ENCODE measurements at regions of chr17 and their contacts with region 1.

Region 1: GRCh38 chr17:41548844-41549595 is 20.9 kb upstream of the KRT19 start:
- DNase-seq: peak; percentile 94
- H3K4me3 Mint-ChIP-seq: no peak overlapping the region
- H3K27ac Mint-ChIP-seq: no peak overlapping the region
- H3K4me1 Mint-ChIP-seq: peaks cover 18% of the 10 kb centered on the region
- H3K27me3 Mint-ChIP-seq: no peaks in the 10 kb centered on the region

Region 2: GRCh38 chr17:40803617-40804082 is 745.4 kb before region 1 on chr17:
- CTCF ChIA-PET with region 1: no interaction called
- intact Hi-C with region 1: loop called (anchors 1 kb)
- DNase-seq: peak; percentile 90
- H3K4me3 Mint-ChIP-seq: no peak overlapping the region
- H3K27ac Mint-ChIP-seq: no peak overlapping the region
- H3K4me1 Mint-ChIP-seq: no peaks in the 10 kb centered on the region
- H3K27me3 Mint-ChIP-seq: peaks cover 23% of the 10 kb centered on the region

Region 3: GRCh38 chr17:40909351-40909750 is 639.7 kb before region 1 on chr17:
- CTCF ChIA-PET with region 1: interaction called, 18 read pairs
- intact Hi-C with region 1: loop called (anchors 1 kb)
- DNase-seq: peak; percentile 74
- H3K4me3 Mint-ChIP-seq: no peak overlapping the region
- H3K27ac Mint-ChIP-seq: no peak overlapping the region
- H3K4me1 Mint-ChIP-seq: no peaks in the 10 kb centered on the region
- H3K27me3 Mint-ChIP-seq: peaks cover 20% of the 10 kb centered on the region

Region 4: DNA sequence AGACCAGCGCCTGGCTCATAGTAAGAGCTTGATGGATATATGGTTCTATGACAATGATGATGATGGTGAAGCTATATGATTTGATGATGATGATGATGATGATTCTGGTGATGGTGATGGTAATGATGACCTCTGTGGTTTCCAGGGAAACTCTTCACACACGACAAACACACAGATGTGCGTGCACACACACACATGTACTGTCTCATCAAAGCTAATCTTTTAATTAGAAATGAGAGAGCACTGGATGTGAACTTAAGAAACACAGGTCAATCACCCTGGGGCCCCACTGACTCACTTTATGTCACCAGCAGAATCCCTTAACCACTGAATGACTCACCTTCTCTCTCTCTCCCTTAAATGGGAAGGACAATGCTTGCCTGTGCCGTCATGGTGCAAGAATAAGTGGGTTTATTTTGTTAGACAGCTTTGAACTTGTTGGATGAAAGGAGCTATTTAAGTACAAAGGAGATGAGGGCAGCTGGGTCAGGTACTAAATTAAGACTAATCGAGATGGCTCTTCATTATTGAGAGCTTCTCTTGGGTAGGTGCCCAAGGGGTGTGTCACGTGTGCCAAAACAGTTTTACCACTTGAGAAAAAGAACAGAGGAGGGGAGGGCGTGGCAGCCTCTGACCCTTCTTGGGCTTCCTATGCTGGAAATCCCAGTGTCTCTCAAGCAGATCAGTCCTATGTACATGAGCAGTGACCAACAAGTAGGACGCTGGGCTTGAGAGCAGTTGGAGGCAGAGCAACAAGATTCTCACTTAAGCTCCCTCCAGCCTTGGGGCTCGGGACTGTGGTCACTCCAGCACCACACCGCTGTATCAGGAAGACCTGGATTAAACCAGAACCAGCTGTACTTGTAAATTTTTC is 145.0 kb before region 1 on chr17:
- CTCF ChIA-PET with region 1: interaction called, 6 read pairs
- intact Hi-C with region 1: loop called (anchors 5 kb)
- DNase-seq: peak; percentile 85
- H3K4me3 Mint-ChIP-seq: no peak overlapping the region
- H3K27ac Mint-ChIP-seq: peak overlapping the region; percentile 79
- H3K4me1 Mint-ChIP-seq: peaks cover 46% of the 10 kb centered on the region
- H3K27me3 Mint-ChIP-seq: no peaks in the 10 kb centered on the region

Region 5: GRCh38 chr17:41496820-41497408 is 52.1 kb before region 1 on chr17:
- CTCF ChIA-PET with region 1: interaction called, 11 read pairs
- intact Hi-C with region 1: loop called (anchors 5 kb)
- DNase-seq: peak; percentile 87
- H3K4me3 Mint-ChIP-seq: no peak overlapping the region
- H3K27ac Mint-ChIP-seq: no peak overlapping the region
- H3K4me1 Mint-ChIP-seq: peaks cover 6% of the 10 kb centered on the region
- H3K27me3 Mint-ChIP-seq: no peaks in the 10 kb centered on the region

Region 6: GRCh38 chr17:41559548-41559947 is 10.5 kb after region 1 on chr17:
- CTCF ChIA-PET with region 1: interaction called, 35 read pairs
- intact Hi-C with region 1: no loop called
- DNase-seq: no peak
- H3K4me3 Mint-ChIP-seq: no peak overlapping the region
- H3K27ac Mint-ChIP-seq: no peak overlapping the region
- H3K4me1 Mint-ChIP-seq: no peaks in the 10 kb centered on the region
- H3K27me3 Mint-ChIP-seq: peaks cover 27% of the 10 kb centered on the region

Region 7: GRCh38 chr17:41648411-41649195 is 99.6 kb after region 1 on chr17:
- CTCF ChIA-PET with region 1: interaction called, 124 read pairs
- intact Hi-C with region 1: loop called (anchors 1 kb)
- DNase-seq: peak; percentile 89
- H3K4me3 Mint-ChIP-seq: peak overlapping the region; percentile 43
- H3K27ac Mint-ChIP-seq: no peak overlapping the region
- H3K4me1 Mint-ChIP-seq: peaks cover 8% of the 10 kb centered on the region
- H3K27me3 Mint-ChIP-seq: no peaks in the 10 kb centered on the region

Measured in activated naive CD4-positive, alpha-beta T cell treated with anti-CD3 and anti-CD28 coated beads for 36 hours (primary cell).